ENCODE measurements at regions of chr17 and their contacts with region 1.

Region 1: GRCh38 chr17:36629252-36629847 is 28.0 kb downstream of the MRM1 start:
- ATAC-seq: peak; percentile 86 to 98 (median 88)
- H3K4me3 ChIP-seq: no peak overlapping the region
- H3K27ac ChIP-seq: no peak overlapping the region
- H3K4me1 ChIP-seq: peaks cover 33 to 47% of the 10 kb centered on the region in 2 donors

Region 2: GRCh38 chr17:36463916-36464315 is 165.4 kb before region 1 on chr17:
- in situ Hi-C with region 1: no loop called
- ATAC-seq: peak; percentile 99 to 100 (median 100)
- H3K4me3 ChIP-seq: no peak overlapping the region
- H3K27ac ChIP-seq: peak overlapping the region in 1 of 2 donors; percentile 47
- H3K4me1 ChIP-seq: peaks cover 0 to 5% of the 10 kb centered on the region in 2 donors

Region 3: DNA sequence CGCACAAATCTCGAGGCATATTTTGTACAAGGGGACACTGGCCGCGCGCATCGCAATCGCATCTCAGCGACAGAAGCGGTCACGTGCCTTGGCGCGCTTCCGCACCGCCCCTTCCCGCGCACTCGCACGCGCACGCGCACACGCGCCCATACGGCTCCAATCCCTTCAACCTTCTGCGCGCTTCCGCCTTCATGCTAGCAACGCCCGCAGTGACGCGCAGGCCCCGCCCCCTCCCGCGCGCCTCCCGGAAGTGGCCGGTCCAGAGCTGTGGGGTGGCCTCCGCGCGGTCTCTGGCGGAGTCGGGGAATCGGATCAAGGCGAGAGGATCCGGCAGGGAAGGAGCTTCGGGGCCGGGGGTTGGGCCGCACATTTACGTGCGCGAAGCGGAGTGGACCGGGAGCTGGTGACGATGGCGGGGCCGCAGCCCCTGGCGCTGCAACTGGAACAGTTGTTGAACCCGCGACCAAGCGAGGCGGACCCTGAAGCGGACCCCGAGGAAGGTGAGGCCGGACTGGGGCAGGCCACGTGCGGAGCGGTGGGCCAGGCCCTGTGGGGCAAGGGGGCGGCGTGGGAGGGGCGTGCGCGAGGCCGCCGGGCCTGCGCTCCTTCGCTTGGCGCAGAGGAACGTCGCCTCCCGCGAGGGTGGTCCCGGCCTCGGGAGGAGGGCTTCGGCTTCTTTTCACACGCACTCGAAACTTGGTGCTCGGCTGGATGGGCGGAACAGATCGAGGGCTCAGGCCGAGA is 319.5 kb after region 1 on chr17 and contains the start of gene AATF:
- in situ Hi-C with region 1: loop called in 4 of 9 experiments (anchors 25 kb)
- ATAC-seq: peak; percentile 92 to 98 (median 96)
- H3K4me3 ChIP-seq: peak within 1 kb of the TSS; percentile 63 to 84 (median 68)
- H3K27ac ChIP-seq: peak within 1 kb of the TSS; percentile 80 to 83
- H3K4me1 ChIP-seq: peaks cover 10 to 20% of the 10 kb centered on the region in 2 donors
- total RNA-seq, gene AATF: 30.7 to 60.9 (median 43.3) TPM

Region 4: DNA sequence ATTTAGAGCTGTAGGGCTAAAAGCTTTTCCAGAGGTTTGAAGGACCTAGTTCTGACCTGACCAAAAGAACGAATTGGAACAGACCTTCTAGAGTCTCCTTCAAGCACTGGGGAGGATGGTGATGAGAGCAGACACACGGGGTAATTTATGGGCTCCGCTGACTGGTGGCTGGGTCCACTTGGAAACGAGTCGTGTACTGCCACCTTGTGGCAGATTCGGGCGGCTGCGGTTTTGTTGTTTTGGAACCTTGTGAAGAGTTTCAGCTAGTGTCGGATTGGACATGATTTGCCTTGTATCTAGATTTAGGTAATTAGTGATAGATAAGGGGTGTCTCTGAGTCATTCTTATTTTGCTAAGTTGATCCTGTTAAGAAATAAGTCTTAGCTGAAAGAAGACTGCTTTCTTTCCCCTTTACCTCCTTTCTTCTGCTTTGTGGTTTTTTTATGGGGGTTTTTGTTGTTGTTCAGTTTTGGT is 418.3 kb after region 1 on chr17:
- in situ Hi-C with region 1: loop called in 8 of 9 experiments (anchors 25 kb)
- ATAC-seq: peak; percentile 79 to 89 (median 84)
- H3K4me3 ChIP-seq: no peak overlapping the region
- H3K27ac ChIP-seq: peak overlapping the region in 1 of 2 donors; percentile 41
- H3K4me1 ChIP-seq: peaks cover 35 to 65% of the 10 kb centered on the region in 2 donors

Region 5: GRCh38 chr17:37220607-37220953 is 591.2 kb after region 1 on chr17:
- in situ Hi-C with region 1: loop called in 7 of 9 experiments (anchors 25 kb)
- ATAC-seq: peak; percentile 43 to 85 (median 65)
- H3K4me3 ChIP-seq: no peak overlapping the region
- H3K27ac ChIP-seq: no peak overlapping the region
- H3K4me1 ChIP-seq: peaks cover 13 to 21% of the 10 kb centered on the region in 2 donors